K562 (cell line): ENCODE measurements at regions of chr15 and their contacts with region 1.

Region 1: GRCh38 chr15:63818191-63818590 is 15.6 kb downstream of the HERC1 start:
- DNase-seq: peak; percentile 32 to 85 (median 58)
- ATAC-seq: peak; percentile 93
- H3K4me3 ChIP-seq: no peak overlapping the region
- H3K27ac ChIP-seq: peak overlapping the region; percentile 58
- H3K4me1 ChIP-seq: peaks cover 12 to 23% of the 10 kb centered on the region in 2 experiments
- H3K27me3 ChIP-seq: no peaks in the 10 kb centered on the region
- CTCF ChIP-seq: peak; percentile 31 to 55 (median 42); a peak in 3 of 6 replicates
- EP300 ChIP-seq: peak; percentile 49; the same call in 1 of the 2 replicates
- POLR2A ChIP-seq: no peak
- RAD21 ChIP-seq: 0 out of 4 replicates have a peak, but pooled peaks have one; percentile 9 to 11

Region 2: GRCh38 chr15:63833021-63833696 is 15.0 kb after region 1 on chr15:
- CTCF ChIA-PET with region 1: no interaction called
- POLR2A ChIA-PET with region 1: interaction called, 21 read pairs
- in situ Hi-C with region 1: no loop called
- intact Hi-C with region 1: no loop called
- DNase-seq: peak; percentile 63 to 68 (median 65)
- ATAC-seq: peak; percentile 79
- H3K4me3 ChIP-seq: peak overlapping the region; percentile 61
- H3K27ac ChIP-seq: peak overlapping the region; percentile 98
- H3K4me1 ChIP-seq: peaks cover 32 to 39% of the 10 kb centered on the region in 2 experiments
- H3K27me3 ChIP-seq: no peaks in the 10 kb centered on the region
- CTCF ChIP-seq: no peak
- EP300 ChIP-seq: no peak
- POLR2A ChIP-seq: no peak
- RAD21 ChIP-seq: no peak